Heart left ventricle (tissue), 16 donors: ENCODE measurements at regions of chr1 and their contacts with region 1.

Region 1: GRCh38 chr1:42282024-42282579 is 52.9 kb downstream of the FOXJ3 start:
- DNase-seq: no peak
- ATAC-seq: peak; percentile 10 to 73 (median 65)
- H3K4me3 ChIP-seq: no peak overlapping the region
- H3K27ac ChIP-seq: peak overlapping the region in 1 of 12 donors; percentile 27
- H3K4me1 ChIP-seq: peaks cover 0 to 53% (median 22%) of the 10 kb centered on the region in 12 donors
- H3K27me3 ChIP-seq: no peaks in the 10 kb centered on the region
- CTCF ChIP-seq: no peak
- POLR2A ChIP-seq: no peak

Region 2: DNA sequence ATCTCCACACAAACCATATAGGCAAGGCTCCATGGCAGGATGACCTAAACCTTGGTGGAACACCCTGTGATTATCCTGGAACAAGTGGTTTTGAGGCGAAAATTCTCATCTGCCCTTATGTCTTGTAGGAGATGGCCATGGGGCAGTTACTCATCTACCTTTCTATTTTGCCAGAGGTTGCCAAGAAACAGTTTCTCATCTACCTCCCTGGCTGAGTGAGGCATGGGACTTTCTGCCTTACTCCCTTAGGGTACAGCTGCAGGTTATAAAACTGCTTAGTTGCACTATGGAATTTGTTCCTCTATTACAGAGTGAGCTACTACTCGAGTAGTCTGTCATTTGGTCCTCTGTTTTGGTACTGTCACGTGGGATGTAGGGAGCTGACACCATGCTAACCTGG is 86.3 kb before region 1 on chr1:
- intact Hi-C with region 1: no loop called
- DNase-seq: no peak
- ATAC-seq: no peak
- H3K4me3 ChIP-seq: no peak overlapping the region
- H3K27ac ChIP-seq: no peak overlapping the region
- H3K4me1 ChIP-seq: no peaks in the 10 kb centered on the region
- H3K27me3 ChIP-seq: no peaks in the 10 kb centered on the region
- CTCF ChIP-seq: no peak
- POLR2A ChIP-seq: no peak

Region 3: DNA sequence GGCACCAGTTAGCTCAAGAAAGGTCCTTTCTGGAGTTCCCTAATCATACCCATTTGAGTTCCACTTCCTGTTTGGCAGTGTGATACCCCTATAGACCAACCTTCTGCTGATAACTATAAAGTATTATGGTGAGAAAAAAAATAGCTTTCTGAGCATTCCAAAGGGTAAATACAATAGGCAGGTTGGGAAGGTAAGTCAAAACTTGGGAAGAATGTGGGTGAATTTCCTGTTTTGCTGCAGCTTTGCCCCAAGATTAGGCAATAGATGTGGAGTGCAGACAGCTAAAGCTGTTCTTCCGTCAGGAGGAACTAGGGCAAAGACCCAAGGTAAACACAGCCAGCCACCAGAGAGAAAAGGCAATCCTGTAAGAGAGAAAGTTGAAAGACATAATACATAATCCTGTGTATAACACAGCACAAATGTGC is 67.6 kb before region 1 on chr1:
- intact Hi-C with region 1: loop called in 1 of 10 experiments (anchors 10 kb)
- DNase-seq: peak in 1 of 5 donors; percentile 40
- ATAC-seq: peak in 3 of 4 donors; percentile 44 to 82 (median 80)
- H3K4me3 ChIP-seq: no peak overlapping the region
- H3K27ac ChIP-seq: peak overlapping the region in 2 of 12 donors; percentile 6 to 51
- H3K4me1 ChIP-seq: peaks cover 0 to 49% (median 28%) of the 10 kb centered on the region in 12 donors
- H3K27me3 ChIP-seq: no peaks in the 10 kb centered on the region
- CTCF ChIP-seq: no peak
- POLR2A ChIP-seq: no peak

Region 4: GRCh38 chr1:42319128-42319851 is 37.2 kb after region 1 on chr1:
- intact Hi-C with region 1: loop called in 1 of 10 experiments (anchors 5 kb)
- DNase-seq: no peak
- ATAC-seq: peak in 1 of 4 donors; percentile 17
- H3K4me3 ChIP-seq: peak overlapping the region in 1 of 12 donors; percentile 0
- H3K27ac ChIP-seq: peak overlapping the region in 11 of 12 donors; percentile 49 to 81 (median 71)
- H3K4me1 ChIP-seq: peaks cover 9 to 94% (median 73%) of the 10 kb centered on the region in 12 donors
- H3K27me3 ChIP-seq: no peaks in the 10 kb centered on the region
- CTCF ChIP-seq: no peak
- POLR2A ChIP-seq: no peak

Region 5: GRCh38 chr1:42860339-42861013 is 578.4 kb after region 1 on chr1:
- intact Hi-C with region 1: no loop called
- DNase-seq: no peak
- ATAC-seq: no peak
- H3K4me3 ChIP-seq: no peak overlapping the region
- H3K27ac ChIP-seq: no peak overlapping the region
- H3K4me1 ChIP-seq: no peaks in the 10 kb centered on the region
- H3K27me3 ChIP-seq: peaks cover 0 to 10% (median 0%) of the 10 kb centered on the region in 9 donors
- CTCF ChIP-seq: peak in 2 of 12 donors; percentile 9 to 13
- POLR2A ChIP-seq: no peak